ENCODE measurements at regions of chr12 and their contacts with region 1.

Region 1: GRCh38 chr12:94532490-94533422 is 73.1 kb upstream of the CEP83 start:
- DNase-seq: peak; percentile 70 to 81
- ATAC-seq: peak; percentile 76 to 95 (median 82)
- H3K4me3 ChIP-seq: no peak overlapping the region
- H3K27ac ChIP-seq: no peak overlapping the region
- H3K4me1 ChIP-seq: no peaks in the 10 kb centered on the region
- H3K27me3 ChIP-seq: no peaks in the 10 kb centered on the region
- CTCF ChIP-seq: peak; percentile 73

Region 2: GRCh38 chr12:94133964-94134795 is 398.6 kb before region 1 on chr12:
- intact Hi-C with region 1: loop called (anchors 1 to 5 kb)
- DNase-seq: no peak
- ATAC-seq: peak; percentile 76 to 88 (median 82)
- H3K4me3 ChIP-seq: no peak overlapping the region
- H3K27ac ChIP-seq: no peak overlapping the region
- H3K4me1 ChIP-seq: no peaks in the 10 kb centered on the region
- H3K27me3 ChIP-seq: peaks cover 0 to 4% (median 1%) of the 10 kb centered on the region in 3 donors
- CTCF ChIP-seq: peak; percentile 85

Region 3: DNA sequence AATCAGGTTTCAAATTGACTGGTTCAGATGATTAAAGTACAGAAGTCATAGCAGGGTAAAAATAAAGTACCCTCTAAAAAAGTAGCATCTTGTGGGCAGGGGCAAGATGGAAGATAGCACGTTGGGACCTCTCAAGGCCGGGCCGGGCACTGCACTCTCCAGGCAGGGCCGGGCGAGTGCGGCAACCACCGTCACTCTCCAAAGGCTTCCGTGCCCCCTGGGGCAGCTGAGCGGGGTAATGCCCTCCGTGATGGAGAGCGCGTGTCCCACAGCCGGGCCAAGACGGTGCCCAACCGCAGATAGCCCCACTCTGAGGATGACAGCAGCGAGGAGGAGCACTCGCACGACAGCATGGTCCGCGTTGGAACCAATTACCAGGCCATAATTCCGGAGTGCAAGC is 392.9 kb before region 1 on chr12:
- intact Hi-C with region 1: loop called (anchors 5 kb)
- DNase-seq: no peak
- ATAC-seq: no peak
- H3K4me3 ChIP-seq: no peak overlapping the region
- H3K27ac ChIP-seq: no peak overlapping the region
- H3K4me1 ChIP-seq: no peaks in the 10 kb centered on the region
- H3K27me3 ChIP-seq: peaks cover 0 to 2% (median 0%) of the 10 kb centered on the region in 3 donors
- CTCF ChIP-seq: no peak

Region 4: GRCh38 chr12:94149119-94149780 is 383.5 kb before region 1 on chr12:
- intact Hi-C with region 1: loop called in 1 of 2 experiments (anchors 5 kb)
- DNase-seq: peak in 1 of 2 donors; percentile 41
- ATAC-seq: peak; percentile 40 to 67 (median 64)
- H3K4me3 ChIP-seq: peak overlapping the region; percentile 69
- H3K27ac ChIP-seq: no peak overlapping the region
- H3K4me1 ChIP-seq: no peaks in the 10 kb centered on the region
- H3K27me3 ChIP-seq: peaks cover 0 to 51% (median 13%) of the 10 kb centered on the region in 3 donors
- CTCF ChIP-seq: peak; percentile 19

Region 5: DNA sequence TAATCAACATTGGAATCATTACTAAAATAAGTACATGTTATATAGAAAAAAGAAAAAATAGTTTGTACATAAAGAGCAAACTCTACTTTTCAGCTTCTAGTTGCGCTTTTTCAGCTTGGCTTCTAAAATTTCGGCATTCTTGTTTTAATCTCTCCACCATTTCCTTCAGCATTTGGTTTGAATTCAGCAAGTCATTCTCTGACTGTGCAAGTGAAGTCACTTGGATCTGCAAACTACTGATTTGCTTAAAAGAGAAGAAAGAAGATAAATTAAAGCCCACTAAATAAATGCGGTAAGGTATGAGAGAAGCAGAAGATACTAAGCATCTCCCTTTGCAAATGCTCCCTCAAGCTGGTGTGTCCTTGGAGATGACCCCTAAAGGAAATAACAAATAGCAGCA is 199.4 kb before region 1 on chr12:
- intact Hi-C with region 1: loop called in 1 of 2 experiments (anchors 5 kb)
- DNase-seq: no peak
- ATAC-seq: no peak
- H3K4me3 ChIP-seq: no peak overlapping the region
- H3K27ac ChIP-seq: no peak overlapping the region
- H3K4me1 ChIP-seq: no peaks in the 10 kb centered on the region
- H3K27me3 ChIP-seq: no peaks in the 10 kb centered on the region
- CTCF ChIP-seq: no peak

Region 6: DNA sequence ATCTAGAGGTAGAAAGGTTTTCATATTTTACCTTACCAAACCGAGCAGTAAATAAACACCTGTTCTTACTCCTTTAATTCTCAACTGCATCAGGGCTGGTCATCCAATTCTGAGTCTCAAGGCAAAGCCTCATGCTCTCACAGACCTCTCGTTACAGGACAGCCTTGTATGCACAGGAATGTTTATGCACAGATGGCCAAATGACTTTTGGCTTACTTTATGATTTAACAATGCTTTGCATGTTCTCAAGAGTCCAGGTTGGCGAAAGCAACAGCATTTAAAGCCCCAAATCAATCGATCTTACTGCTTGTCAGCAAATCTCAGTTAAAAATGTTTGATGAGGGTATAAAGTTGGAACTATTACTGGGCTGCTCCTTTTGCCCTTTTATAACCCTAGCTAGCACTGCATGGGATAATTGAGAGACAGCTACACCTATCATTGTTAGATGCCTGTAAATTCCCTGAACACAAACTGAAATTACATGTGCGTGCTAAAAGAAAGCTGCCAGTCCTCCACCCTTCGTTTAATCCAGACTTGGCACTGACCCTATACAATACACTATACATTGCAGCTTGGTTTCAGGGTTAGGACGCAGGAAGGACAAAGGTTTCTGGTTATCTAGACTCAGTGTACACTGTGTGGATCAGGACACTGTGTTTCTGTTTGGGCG is 54.0 kb after region 1 on chr12:
- intact Hi-C with region 1: no loop called
- DNase-seq: no peak
- ATAC-seq: no peak
- H3K4me3 ChIP-seq: no peak overlapping the region
- H3K27ac ChIP-seq: peak overlapping the region; percentile 10
- H3K4me1 ChIP-seq: peaks cover 24% of the 10 kb centered on the region
- H3K27me3 ChIP-seq: no peaks in the 10 kb centered on the region
- CTCF ChIP-seq: no peak